Activated CD4-positive, alpha-beta T cell treated with anti-CD3 and anti-CD28 coated beads, Interleukin-2, amount 10 ng/mL, durations not matched to agents 24 days and 14 days (primary cell): ENCODE measurements at regions of chr6 and their contacts with region 1.

Region 1: GRCh38 chr6:4018172-4018905 is 60.6 kb downstream of the FAM217A start:
- DNase-seq: peak; percentile 99
- H3K4me3 Mint-ChIP-seq: peak overlapping the region; percentile 94
- H3K27ac Mint-ChIP-seq: peak overlapping the region; percentile 98
- H3K4me1 Mint-ChIP-seq: peaks cover 46% of the 10 kb centered on the region
- H3K27me3 Mint-ChIP-seq: no peaks in the 10 kb centered on the region

Region 2: DNA sequence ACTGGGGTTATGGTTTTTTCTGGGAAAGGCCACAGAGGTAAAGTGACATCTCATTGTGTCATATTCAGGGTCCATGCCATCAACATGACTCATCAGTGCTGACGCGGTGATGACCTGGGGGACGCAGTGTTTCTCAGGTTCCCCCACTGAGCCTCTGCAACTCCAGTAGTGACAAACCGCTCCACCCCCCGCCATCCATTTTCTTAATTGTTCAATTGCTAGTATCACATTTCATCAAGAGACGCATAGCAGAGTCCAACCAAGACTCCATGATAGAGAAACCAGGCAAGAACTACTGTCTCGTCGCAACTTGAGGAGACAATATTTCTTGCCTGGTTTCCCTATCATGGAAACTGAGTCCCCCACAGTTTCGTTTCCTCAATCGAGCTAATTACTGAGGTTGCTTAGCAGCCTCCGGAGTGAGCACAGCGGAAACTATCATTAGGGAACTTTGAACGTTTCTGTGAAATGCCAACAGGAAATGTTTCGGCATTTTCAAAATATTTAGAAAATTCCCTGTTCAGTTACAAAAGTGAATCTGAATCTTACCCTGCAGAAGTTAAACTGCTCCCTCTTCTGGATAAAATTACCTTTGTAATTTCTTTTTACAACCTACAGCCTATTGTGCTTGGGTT is 1164.5 kb before region 1 on chr6:
- intact Hi-C with region 1: loop called (anchors 10 kb)
- DNase-seq: peak; percentile 87
- H3K4me3 Mint-ChIP-seq: peak overlapping the region; percentile 80
- H3K27ac Mint-ChIP-seq: peak overlapping the region; percentile 98
- H3K4me1 Mint-ChIP-seq: peaks cover 65% of the 10 kb centered on the region
- H3K27me3 Mint-ChIP-seq: no peaks in the 10 kb centered on the region

Region 3: GRCh38 chr6:3518356-3519225 is 499.7 kb before region 1 on chr6:
- intact Hi-C with region 1: no loop called
- DNase-seq: no peak
- H3K4me3 Mint-ChIP-seq: no peak overlapping the region
- H3K27ac Mint-ChIP-seq: no peak overlapping the region
- H3K4me1 Mint-ChIP-seq: no peaks in the 10 kb centered on the region
- H3K27me3 Mint-ChIP-seq: peaks cover 3% of the 10 kb centered on the region

Region 4: DNA sequence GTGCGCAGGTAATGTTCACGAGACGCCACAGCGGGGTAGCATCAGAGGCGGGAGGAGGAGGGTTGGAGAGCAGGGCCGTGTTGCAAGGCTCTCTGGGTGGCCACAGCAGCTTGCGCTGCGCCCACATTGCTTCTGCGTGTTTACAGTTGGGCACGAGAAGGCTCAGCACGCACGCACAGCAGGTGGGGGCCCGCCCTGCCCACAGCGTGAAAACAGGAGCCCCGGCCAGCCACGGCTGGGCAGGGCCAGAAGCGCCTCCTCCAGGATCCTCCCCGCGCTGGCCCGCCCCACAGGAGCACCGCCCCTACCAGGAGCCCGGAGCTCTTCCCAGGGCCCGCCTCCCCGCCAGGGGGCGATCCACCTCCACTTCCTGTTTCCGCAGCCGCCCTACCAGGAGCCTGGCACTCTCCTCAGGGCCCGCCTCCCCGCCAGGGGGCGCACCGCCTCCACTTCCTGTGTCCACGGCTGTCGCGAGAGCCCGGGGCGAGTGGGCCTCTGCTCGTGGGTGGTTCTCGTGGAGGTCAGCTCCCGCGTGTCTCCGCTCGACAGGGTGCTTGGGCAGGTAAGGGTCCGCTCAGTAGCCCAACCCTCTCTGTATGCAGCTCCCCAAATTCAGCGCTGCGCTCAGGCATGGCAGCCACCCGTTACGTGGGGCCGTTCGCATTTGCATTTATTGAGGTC is 169.3 kb before region 1 on chr6 and contains the start of gene FAM50B:
- intact Hi-C with region 1: loop called (anchors 5 kb)
- DNase-seq: peak; percentile 97
- H3K4me3 Mint-ChIP-seq: peak within 1 kb of the TSS; percentile 75
- H3K27ac Mint-ChIP-seq: peak within 1 kb of the TSS; percentile 81
- H3K4me1 Mint-ChIP-seq: peaks cover 23% of the 10 kb centered on the region
- H3K27me3 Mint-ChIP-seq: peaks cover 4% of the 10 kb centered on the region
- total RNA-seq, gene FAM50B: 9.8 and 10.0 TPM in 2 replicates

Region 5: DNA sequence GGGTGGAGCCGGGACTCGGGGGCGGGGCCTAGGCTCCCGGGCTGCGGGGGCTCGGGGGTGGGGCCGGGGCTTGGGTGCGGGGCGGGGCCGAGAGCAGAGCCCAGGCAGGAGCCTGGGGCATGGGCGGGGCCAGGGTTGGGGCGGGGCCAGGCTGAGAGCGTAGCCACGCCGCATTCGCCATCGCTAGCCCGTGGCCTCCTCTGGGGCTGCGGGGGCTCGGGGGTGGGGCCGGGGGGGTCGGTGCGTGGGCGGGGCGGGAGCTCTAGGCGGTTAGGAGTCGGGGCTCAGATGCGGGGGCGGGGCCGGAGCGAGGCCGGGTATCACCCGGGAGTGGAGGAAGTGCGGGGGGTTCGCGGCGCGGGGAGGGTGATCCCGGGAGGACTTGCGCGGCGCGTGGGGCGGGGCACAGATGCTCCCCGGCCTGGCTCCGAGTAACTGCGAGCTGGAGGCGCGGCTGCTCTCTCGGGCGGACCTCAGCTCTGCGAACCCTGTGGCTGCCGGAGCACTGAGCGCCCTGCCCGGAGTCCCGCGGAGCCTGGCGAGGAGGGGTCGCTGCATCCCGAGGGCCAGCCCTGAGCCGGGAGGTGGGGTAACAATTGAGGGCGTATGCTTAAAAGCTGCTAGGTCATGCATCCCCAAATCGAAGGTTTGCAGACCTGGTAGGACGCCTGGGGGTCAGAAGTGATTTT is 117.5 kb after region 1 on chr6:
- intact Hi-C with region 1: loop called (anchors 1 kb)
- DNase-seq: peak; percentile 97
- H3K4me3 Mint-ChIP-seq: peak overlapping the region; percentile 85
- H3K27ac Mint-ChIP-seq: peak overlapping the region; percentile 84
- H3K4me1 Mint-ChIP-seq: peaks cover 28% of the 10 kb centered on the region
- H3K27me3 Mint-ChIP-seq: no peaks in the 10 kb centered on the region

Region 6: DNA sequence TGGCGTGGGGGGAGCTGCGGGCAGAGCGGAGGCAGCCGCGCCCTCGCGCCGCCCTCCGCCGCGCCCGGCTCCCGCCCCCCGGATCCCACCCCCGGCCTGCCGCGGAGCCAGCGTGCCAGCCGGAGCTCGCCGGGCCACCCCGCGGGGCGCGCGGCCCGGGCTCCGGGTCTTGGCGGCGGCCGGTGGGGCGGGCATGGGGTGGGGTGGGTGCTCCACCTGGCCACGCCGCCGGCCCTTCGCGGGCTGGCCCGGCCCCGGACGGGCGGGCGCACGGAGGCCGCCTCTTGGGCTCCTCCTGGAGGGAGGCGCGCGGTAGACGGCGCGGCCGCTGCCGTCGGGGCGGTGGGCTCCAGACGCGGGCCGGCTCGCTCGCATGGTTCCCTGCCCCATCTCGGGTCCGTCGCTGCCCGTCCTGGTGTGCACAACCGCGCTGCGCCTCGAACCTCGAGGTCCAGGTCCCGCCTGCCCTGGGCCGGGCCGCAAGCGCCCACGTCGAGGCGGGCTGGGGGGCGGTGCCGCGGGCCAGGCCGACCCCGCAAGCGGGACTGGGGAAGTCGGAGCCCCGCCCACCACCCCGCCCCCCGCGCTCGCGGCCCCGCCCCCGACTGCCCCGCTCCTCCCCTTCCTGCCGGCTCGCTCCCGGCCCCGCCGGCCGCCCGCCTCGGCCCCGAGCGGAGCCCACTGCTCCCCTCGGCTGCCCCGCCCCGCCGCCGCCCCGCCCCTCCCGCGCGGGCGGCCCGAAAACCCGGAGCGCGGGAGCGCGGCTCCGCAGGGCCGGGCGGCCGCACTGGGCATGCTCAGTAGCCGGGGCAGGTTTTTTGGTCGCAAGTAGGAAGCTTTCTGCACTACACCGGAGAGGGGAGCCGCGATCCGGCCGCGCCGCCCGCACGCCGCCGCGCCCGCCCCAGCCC is 757.5 kb after region 1 on chr6 and contains the start of gene CDYL:
- intact Hi-C with region 1: loop called (anchors 5 kb)
- DNase-seq: peak; percentile 97
- H3K4me3 Mint-ChIP-seq: peak within 1 kb of the TSS; percentile 85
- H3K27ac Mint-ChIP-seq: peak within 1 kb of the TSS; percentile 87
- H3K4me1 Mint-ChIP-seq: peaks cover 37% of the 10 kb centered on the region
- H3K27me3 Mint-ChIP-seq: peaks cover 35% of the 10 kb centered on the region
- total RNA-seq, gene CDYL: 23.4 and 24.4 TPM in 2 replicates